ENCODE measurements at regions of chrX and their contacts with region 1.

Region 1: GRCh38 chrX:9708904-9709553 is 56.6 kb downstream of the GPR143 start:
- DNase-seq: peak; percentile 88

Region 2: DNA sequence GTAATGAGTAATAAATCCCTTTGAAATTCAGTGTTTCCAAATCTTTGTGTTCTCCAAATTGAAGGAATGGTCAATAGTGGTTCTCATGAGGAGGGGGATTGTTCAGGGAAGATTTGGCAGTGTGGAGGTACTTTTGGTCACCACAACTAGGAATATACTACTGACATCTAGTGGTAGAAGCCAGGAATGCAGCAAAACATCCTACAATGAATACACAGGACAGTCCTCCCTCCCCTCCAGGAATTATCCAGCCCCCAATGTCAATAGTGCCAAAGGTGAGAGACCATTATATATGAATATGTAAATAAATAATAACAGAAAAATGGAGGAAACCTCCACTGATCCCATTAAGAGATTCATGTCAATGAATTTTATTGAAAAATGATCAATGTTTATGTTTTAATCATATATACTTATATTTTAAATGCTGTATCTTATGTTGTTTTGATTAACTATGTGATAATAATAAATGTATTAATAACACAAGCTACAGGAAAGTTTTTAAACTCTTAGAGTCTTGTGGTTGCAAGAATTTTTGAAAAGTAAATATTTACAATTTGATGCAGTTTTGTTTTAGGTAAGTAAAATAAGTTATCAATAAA is 893.5 kb before region 1 on chrX:
- intact Hi-C with region 1: loop called (anchors 10 kb)
- DNase-seq: no peak

Region 3: GRCh38 chrX:8971116-8971515 is 737.9 kb before region 1 on chrX:
- intact Hi-C with region 1: loop called (anchors 10 kb)
- DNase-seq: no peak

Region 4: GRCh38 chrX:9310596-9310995 is 398.4 kb before region 1 on chrX:
- intact Hi-C with region 1: no loop called
- DNase-seq: no peak